Posterior cingulate gyrus (tissue), 11 donors: ENCODE measurements at regions of chr14 and their contacts with region 1.

Region 1: DNA sequence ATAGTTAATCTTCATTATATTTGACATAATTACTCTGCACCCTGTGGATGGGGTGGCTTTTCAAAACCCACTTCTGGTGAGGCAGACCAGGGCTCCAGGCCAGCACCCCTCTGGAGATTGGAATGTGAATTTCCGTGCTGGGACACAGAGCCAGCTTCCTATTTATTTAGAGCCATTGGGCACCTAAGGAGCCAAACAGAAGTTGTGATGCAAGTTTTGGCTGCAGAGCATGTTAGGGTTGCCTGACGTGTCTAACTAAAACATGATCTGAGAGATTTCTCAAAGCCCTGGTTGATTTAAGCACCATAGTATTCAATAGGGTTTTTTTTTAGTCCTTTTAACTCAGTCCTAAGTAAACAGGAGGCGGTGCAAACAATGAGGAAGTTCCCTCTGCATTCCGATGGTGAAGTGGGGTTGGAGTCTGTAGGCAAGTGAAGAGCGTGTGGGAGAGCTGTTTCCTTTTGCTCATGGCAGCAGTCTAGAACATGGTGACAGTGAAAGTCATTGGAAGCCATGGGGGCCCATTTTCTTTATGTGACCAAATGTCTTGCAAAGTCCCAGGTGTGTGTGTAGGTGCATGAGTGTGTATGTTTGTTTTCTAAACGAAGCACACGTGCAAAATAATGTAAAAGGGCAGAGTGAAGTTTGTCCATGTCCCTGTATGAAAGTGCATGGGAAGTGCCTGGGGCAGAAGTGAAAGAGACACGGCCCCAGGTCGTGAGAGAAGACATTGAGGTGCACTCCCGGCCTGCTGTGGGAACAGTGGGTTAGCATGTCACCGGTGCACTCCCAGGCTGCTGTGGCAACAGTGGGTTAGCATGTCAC is 117.7 kb downstream of the PRKCH start:
- DNase-seq: no peak

Region 2: DNA sequence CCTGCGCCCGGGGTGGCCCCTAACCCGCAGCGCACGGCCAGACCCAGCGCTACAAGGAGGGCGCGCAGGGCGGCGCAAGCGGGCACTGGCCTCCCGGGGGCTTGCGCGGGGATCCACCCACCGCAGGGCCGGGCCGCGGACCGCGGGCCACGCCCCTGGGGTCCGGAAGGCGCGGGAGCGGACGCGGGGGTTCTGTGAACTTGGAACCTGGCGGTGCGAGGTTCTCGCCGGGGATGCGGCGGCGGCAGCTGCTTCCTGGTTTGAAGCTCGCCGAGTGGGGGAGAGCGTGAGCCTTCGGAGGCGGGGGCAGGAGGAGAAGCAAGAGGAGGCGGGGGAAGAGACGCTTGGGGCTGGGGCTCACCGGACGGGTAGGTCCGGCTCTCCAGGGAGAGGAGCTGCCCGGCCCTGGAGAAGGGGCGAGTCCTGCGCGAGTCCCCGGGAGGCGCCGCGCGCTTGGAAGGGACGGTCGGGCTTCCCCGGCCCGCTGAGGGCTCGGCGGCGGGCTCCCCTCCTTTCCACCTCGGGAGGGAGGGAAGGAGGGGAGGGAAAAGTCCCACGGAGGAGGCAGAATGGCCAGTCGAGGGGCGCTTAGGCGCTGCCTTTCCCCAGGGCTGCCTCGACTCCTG is 117.6 kb before region 1 on chr14 and contains the start of gene PRKCH:
- intact Hi-C with region 1: loop called (anchors 10 kb)
- DNase-seq: peak in 7 of 10 donors; percentile 6 to 87 (median 34)

Region 3: GRCh38 chr14:61368114-61368726 is 70.9 kb before region 1 on chr14:
- intact Hi-C with region 1: no loop called
- DNase-seq: no peak